SK-N-SH (cell line): ENCODE measurements at regions of chr10 and their contacts with region 1.

Region 1: DNA sequence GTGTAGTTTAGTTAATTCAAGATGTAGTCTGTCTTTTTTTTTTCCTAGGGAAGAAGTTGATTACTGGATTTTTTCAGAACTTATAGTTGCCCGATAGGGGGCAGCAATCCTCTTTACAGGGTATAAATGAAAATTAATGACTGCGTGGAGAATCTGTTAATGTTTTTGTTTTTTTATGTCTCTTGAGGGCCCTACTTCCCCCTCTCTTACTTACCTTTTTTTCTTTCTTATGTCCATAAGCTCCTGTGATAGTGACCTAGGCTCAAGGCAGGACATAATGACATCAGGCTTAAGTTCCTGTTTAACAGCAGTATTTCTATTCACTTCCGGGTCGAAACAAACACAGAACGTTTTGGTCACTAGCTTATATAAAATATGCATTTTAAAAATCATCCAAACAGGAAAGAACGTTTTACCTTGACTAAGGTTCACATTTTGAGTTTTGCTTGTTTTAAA is 18.8 kb downstream of the CDC123 start:
- DNase-seq: peak; percentile 47
- H3K4me3 ChIP-seq: no peak overlapping the region
- H3K27ac ChIP-seq: peak overlapping the region in 1 of 2 experiments; percentile 53; a peak in 2 of 4 replicates
- H3K4me1 ChIP-seq: peaks cover 0 to 3% of the 10 kb centered on the region in 2 experiments; a peak in 2 of 4 replicates
- H3K27me3 ChIP-seq: no peaks in the 10 kb centered on the region
- CTCF ChIP-seq: peak; percentile 89
- EP300 ChIP-seq: no peak
- RAD21 ChIP-seq: peak; percentile 52

Region 2: DNA sequence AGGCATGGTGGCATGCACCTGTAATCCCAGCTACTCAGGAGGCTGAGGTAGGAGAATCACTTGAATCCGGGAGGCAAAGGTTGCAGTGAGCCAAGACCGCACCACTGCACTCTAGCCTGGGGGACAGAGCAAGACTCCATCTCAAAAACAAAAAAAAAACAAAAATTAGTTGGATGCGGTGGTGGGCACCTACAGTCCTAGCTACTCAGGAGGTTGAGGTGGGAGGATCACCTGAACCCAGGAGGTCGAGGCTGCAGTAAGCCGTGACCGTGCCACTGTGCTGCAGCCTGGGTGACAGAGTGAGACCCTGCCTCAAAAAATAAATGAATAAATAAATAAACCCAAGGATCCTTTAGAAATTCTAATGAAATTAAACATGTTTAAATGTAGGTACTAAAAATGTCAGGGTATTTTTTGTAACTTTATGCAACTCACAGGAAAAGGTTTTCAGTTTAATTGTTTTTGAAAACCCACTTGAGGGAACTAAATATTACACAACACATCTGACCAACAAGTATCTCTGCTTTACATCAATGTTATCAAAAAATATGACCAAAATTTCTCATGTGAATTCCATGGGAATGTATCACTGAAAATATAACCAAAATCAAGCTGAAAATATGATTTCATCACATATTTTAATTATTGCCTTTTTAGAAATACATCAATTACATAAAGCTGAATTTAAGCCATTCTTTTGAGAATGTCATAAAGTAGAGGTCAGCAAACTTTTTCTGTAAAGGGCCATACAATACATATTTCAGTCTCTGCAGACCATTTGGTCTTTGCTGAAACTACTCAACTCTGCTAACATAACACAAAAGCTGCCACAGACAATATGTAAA is 196.1 kb before region 1 on chr10:
- CTCF ChIA-PET with region 1: no interaction called
- POLR2A ChIA-PET with region 1: no interaction called
- DNase-seq: no peak
- H3K4me3 ChIP-seq: no peak overlapping the region
- H3K27ac ChIP-seq: peak overlapping the region; percentile 4 to 39; a peak in 3 of 4 replicates
- H3K4me1 ChIP-seq: peaks cover 0 to 11% of the 10 kb centered on the region in 2 experiments; a peak in 1 of 4 replicates
- H3K27me3 ChIP-seq: no peaks in the 10 kb centered on the region
- CTCF ChIP-seq: no peak
- EP300 ChIP-seq: peak in 1 of 2 experiments; percentile 61; a peak in 3 of 4 replicates
- RAD21 ChIP-seq: no peak

Region 3: DNA sequence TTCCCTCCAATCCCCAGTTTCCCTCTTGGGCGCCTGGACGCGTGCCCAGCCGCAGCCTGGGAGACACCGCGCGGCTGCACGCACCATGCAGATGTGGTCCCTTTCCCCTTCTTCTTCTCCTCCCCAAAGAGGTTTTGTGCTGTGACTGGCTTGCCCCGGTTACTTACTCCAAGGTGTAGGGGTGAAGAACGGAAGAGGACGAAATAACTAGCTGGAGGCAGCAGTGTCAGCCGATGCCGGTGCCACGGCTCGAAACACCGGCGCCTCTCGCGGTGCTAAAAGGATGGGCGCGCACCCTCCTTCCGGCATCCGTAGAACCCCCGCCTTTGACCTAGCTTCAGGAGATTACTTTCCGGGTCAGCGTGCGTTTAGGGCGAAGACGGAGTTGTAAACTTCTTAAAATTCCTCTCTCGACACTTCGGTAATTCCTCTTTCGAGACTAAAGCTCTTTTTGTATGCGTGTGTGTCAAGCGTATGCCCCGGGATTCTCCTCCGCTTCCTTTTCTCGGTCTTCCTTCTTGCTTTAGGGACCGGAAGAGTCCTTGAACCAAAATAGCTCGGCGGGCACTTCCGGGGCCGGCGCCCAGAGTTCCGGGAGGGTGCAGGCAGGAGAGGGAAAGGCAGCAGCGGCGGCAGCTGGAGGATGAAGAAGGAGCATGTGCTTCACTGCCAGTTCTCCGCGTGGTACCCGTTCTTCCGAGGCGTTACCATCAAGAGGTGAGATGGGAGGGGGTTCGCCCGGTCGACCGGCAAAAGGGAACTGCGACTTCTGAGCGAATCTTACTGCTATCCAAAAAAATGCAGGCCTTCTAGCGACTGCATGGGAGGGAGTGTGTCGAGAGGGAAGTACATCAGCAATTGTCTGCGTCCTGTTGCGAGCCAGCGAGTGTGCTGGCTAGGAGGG is 18.9 kb before region 1 on chr10 and contains the starts of genes CDC123 and NUDT5:
- CTCF ChIA-PET with region 1: interaction called, 78 read pairs
- POLR2A ChIA-PET with region 1: interaction called, 3 read pairs
- DNase-seq: peak; percentile 90
- H3K4me3 ChIP-seq: peak within 1 kb of the TSS; percentile 92 to 98
- H3K27ac ChIP-seq: peak within 1 kb of the TSS; percentile 94 to 96
- H3K4me1 ChIP-seq: peaks cover 0 to 10% of the 10 kb centered on the region in 2 experiments; a peak in 3 of 4 replicates
- H3K27me3 ChIP-seq: no peaks in the 10 kb centered on the region
- CTCF ChIP-seq: no peak
- EP300 ChIP-seq: no peak
- RAD21 ChIP-seq: no peak
- polyA plus RNA-seq, gene CDC123: 139 and 141 TPM in 2 replicates
- polyA plus RNA-seq, gene NUDT5: 61.2 and 70.7 TPM in 2 replicates

Region 4: GRCh38 chr10:12228851-12229250 is 14.1 kb after region 1 on chr10:
- CTCF ChIA-PET with region 1: interaction called, 21 read pairs
- POLR2A ChIA-PET with region 1: no interaction called
- DNase-seq: no peak
- H3K4me3 ChIP-seq: no peak overlapping the region
- H3K27ac ChIP-seq: no peak overlapping the region
- H3K4me1 ChIP-seq: no peaks in the 10 kb centered on the region
- H3K27me3 ChIP-seq: no peaks in the 10 kb centered on the region
- CTCF ChIP-seq: no peak
- EP300 ChIP-seq: no peak
- RAD21 ChIP-seq: no peak

Region 5: GRCh38 chr10:12235796-12236195 is 21.0 kb after region 1 on chr10:
- CTCF ChIA-PET with region 1: interaction called, 16 read pairs
- POLR2A ChIA-PET with region 1: no interaction called
- DNase-seq: no peak
- H3K4me3 ChIP-seq: no peak overlapping the region
- H3K27ac ChIP-seq: no peak overlapping the region
- H3K4me1 ChIP-seq: no peaks in the 10 kb centered on the region
- H3K27me3 ChIP-seq: no peaks in the 10 kb centered on the region
- CTCF ChIP-seq: no peak
- EP300 ChIP-seq: no peak
- RAD21 ChIP-seq: no peak

Region 6: DNA sequence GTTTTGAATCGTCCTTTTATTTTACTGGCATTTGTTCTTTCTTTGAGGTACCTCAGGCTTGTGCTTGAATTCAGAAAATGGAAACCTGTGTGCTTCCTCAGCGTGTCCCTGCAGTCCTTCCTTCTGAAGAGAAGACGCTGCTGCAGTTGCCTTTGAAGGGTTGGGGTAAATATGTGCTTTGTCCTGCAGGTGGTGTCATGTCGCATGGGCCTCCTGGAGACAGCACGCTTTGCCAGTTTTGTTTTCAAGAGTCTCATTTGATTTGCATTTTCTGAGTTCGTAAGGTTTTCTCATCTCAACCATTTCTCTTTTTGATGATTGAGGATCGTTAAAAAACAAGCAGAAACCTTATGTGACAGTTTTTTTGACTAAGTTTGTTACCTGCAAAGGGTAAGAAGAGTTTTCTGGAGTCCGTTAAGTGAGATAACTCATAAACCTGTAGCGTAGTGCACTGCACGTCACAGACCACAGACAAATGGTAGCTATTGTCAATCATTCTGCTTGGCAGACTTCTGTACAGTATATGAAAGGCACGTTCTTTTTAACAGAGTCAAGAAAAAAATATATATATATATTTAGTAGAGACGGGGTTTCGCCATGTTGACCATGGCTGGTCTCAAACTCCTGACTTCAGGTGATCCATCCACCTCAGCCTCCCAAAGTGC is 38.2 kb after region 1 on chr10:
- CTCF ChIA-PET with region 1: interaction called, 13 read pairs
- POLR2A ChIA-PET with region 1: no interaction called
- DNase-seq: no peak
- H3K4me3 ChIP-seq: no peak overlapping the region
- H3K27ac ChIP-seq: no peak overlapping the region
- H3K4me1 ChIP-seq: no peaks in the 10 kb centered on the region
- H3K27me3 ChIP-seq: no peaks in the 10 kb centered on the region
- CTCF ChIP-seq: peak; percentile 42
- EP300 ChIP-seq: no peak
- RAD21 ChIP-seq: peak; percentile 31